AG04449 (cell line): ENCODE measurements at regions of chr4 and their contacts with region 1.

Region 1: GRCh38 chr4:7987148-7987989 is 47.7 kb upstream of the AFAP1 start:
- DNase-seq: no peak
- H3K4me3 ChIP-seq: no peak overlapping the region
- CTCF ChIP-seq: peak; percentile 85

Region 2: GRCh38 chr4:7770224-7771050 is 216.9 kb before region 1 on chr4:
- CTCF ChIA-PET with region 1: interaction called, 35 read pairs
- POLR2A ChIA-PET with region 1: interaction called, 4 read pairs
- DNase-seq: no peak
- H3K4me3 ChIP-seq: no peak overlapping the region
- CTCF ChIP-seq: peak; percentile 71

Region 3: GRCh38 chr4:7811536-7812191 is 175.7 kb before region 1 on chr4:
- CTCF ChIA-PET with region 1: interaction called, 193 read pairs
- POLR2A ChIA-PET with region 1: no interaction called
- DNase-seq: no peak
- H3K4me3 ChIP-seq: peak overlapping the region; percentile 3; the same call in 1 of the 2 replicates
- CTCF ChIP-seq: no peak

Region 4: GRCh38 chr4:7827991-7828720 is 159.2 kb before region 1 on chr4:
- CTCF ChIA-PET with region 1: interaction called, 10 read pairs
- POLR2A ChIA-PET with region 1: interaction called, 3 read pairs
- DNase-seq: peak; percentile 99
- H3K4me3 ChIP-seq: peak overlapping the region; percentile 40
- CTCF ChIP-seq: no peak

Region 5: DNA sequence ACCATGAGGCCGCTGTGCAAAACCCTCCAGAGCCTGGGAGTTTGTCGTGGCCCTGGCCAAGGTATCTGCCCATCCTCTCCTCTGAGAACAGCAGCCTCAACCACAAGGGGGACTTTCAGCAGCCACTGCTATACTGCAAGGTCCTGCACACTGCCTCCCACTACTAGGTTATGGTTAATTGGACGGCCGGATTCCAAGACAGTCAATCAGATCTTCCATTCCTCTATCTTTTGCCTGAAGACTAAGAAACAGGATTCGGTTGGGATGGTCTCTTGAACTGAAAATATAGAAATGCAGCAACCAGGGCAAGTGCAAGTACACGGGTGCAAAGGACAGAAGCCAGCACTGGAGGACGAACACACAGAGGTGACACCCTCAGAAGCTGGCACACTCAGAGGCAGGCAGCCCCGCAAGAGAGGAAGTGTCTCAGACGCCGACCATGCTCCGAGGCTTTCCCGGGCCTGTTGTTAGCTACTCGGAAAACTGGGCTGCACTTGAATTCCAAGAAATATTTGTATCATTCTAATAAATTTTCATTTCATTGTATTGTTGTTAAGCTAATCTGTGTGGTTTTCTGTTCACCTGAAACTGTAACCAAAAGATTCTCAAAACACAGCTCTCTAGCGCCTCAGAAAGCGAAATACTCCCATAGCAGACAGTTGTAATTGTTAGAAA is 111.0 kb before region 1 on chr4:
- CTCF ChIA-PET with region 1: interaction called, 28 read pairs
- POLR2A ChIA-PET with region 1: no interaction called
- DNase-seq: no peak
- H3K4me3 ChIP-seq: no peak overlapping the region; the same call in 1 of the 2 replicates
- CTCF ChIP-seq: peak; percentile 61